Activated T-helper 1 cell treated with anti-CD3 and anti-CD28 coated beads, Interleukin-12 subunit alpha, Interleukin-12 subunit beta, Interleukin-2, Interleukin-4 antibody, amounts not matched to agents 30 ng/mL and 10 ng/mL and 1 ng/mL, durations not matched to agents 14 hours and 24 hours and 36 hours (primary cell): ENCODE measurements at regions of chr7 and their contacts with region 1.

Region 1: DNA sequence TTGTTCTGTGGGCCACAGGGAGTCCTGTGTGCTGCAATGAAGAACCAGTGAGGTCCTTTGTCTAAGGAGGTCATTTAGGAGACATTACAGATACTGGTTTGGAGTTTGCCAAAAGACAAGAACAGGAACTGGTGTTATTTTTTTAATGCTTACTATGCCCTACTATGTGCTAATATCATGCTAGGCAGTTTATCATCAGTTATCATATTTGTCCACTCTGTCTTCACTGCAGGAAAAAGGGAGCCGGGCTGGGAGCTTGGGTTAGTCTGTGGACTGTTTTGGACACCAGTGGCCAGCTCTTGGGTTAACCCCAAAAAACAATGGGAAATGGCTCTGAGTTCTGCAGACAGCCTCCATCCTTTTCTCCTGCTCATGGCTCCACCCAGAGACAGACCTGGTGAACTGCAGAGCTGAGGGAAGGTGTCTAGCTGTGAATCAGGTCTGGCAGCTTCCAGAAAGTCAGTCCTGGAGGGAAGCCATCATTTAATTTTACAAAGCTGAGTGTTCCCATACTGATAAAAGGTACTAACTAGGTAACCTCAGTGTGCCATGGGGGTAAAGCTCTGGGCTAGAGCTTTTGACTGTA is 101.2 kb upstream of the ZNF746 start:
- DNase-seq: peak; percentile 9
- H3K4me3 Mint-ChIP-seq: no peak overlapping the region
- H3K27ac Mint-ChIP-seq: no peak overlapping the region
- H3K4me1 Mint-ChIP-seq: peaks cover 32% of the 10 kb centered on the region
- H3K27me3 Mint-ChIP-seq: peaks cover 4% of the 10 kb centered on the region

Region 2: GRCh38 chr7:149422129-149422913 is 176.5 kb before region 1 on chr7:
- intact Hi-C with region 1: loop called (anchors 1 kb)
- DNase-seq: peak; percentile 73
- H3K4me3 Mint-ChIP-seq: peak overlapping the region; percentile 66
- H3K27ac Mint-ChIP-seq: peak overlapping the region; percentile 61
- H3K4me1 Mint-ChIP-seq: no peaks in the 10 kb centered on the region
- H3K27me3 Mint-ChIP-seq: peaks cover 4% of the 10 kb centered on the region

Region 3: GRCh38 chr7:149580328-149580727 is 18.5 kb before region 1 on chr7:
- intact Hi-C with region 1: loop called (anchors 2 kb)
- DNase-seq: no peak
- H3K4me3 Mint-ChIP-seq: no peak overlapping the region
- H3K27ac Mint-ChIP-seq: no peak overlapping the region
- H3K4me1 Mint-ChIP-seq: peaks cover 12% of the 10 kb centered on the region
- H3K27me3 Mint-ChIP-seq: peaks cover 3% of the 10 kb centered on the region

Region 4: GRCh38 chr7:149624419-149625339 is 25.9 kb after region 1 on chr7:
- intact Hi-C with region 1: loop called (anchors 1 kb)
- DNase-seq: peak; percentile 91
- H3K4me3 Mint-ChIP-seq: peak overlapping the region; percentile 89
- H3K27ac Mint-ChIP-seq: peak overlapping the region; percentile 83
- H3K4me1 Mint-ChIP-seq: peaks cover 32% of the 10 kb centered on the region
- H3K27me3 Mint-ChIP-seq: peaks cover 6% of the 10 kb centered on the region